ENCODE measurements at regions of chr1 and their contacts with region 1.

Region 1: GRCh38 chr1:15526490-15527339 is at the start of gene DNAJC16:
- DNase-seq: peak; percentile 98
- ATAC-seq: peak; percentile 57
- H3K4me3 Mint-ChIP-seq: peak within 1 kb of the TSS; percentile 84
- H3K27ac Mint-ChIP-seq: peak within 1 kb of the TSS; percentile 88
- H3K4me1 Mint-ChIP-seq: peaks cover 53% of the 10 kb centered on the region
- H3K27me3 Mint-ChIP-seq: no peaks in the 10 kb centered on the region
- total RNA-seq, gene DNAJC16: 10.9 to 14.1 TPM

Region 2: GRCh38 chr1:15246960-15247614 is 279.6 kb before region 1 on chr1 and contains the start of gene FHAD1:
- CTCF ChIA-PET with region 1: no interaction called
- POLR2A ChIA-PET with region 1: no interaction called
- intact Hi-C with region 1: loop called in 1 of 2 experiments (anchors 2 kb)
- DNase-seq: peak; percentile 63
- ATAC-seq: no peak
- H3K4me3 Mint-ChIP-seq: peak within 1 kb of the TSS; percentile 40
- H3K27ac Mint-ChIP-seq: peak within 1 kb of the TSS; percentile 10
- H3K4me1 Mint-ChIP-seq: peaks cover 72% of the 10 kb centered on the region
- H3K27me3 Mint-ChIP-seq: peaks cover 47% of the 10 kb centered on the region
- total RNA-seq, gene FHAD1: 0.21 to 0.53 TPM

Region 3: DNA sequence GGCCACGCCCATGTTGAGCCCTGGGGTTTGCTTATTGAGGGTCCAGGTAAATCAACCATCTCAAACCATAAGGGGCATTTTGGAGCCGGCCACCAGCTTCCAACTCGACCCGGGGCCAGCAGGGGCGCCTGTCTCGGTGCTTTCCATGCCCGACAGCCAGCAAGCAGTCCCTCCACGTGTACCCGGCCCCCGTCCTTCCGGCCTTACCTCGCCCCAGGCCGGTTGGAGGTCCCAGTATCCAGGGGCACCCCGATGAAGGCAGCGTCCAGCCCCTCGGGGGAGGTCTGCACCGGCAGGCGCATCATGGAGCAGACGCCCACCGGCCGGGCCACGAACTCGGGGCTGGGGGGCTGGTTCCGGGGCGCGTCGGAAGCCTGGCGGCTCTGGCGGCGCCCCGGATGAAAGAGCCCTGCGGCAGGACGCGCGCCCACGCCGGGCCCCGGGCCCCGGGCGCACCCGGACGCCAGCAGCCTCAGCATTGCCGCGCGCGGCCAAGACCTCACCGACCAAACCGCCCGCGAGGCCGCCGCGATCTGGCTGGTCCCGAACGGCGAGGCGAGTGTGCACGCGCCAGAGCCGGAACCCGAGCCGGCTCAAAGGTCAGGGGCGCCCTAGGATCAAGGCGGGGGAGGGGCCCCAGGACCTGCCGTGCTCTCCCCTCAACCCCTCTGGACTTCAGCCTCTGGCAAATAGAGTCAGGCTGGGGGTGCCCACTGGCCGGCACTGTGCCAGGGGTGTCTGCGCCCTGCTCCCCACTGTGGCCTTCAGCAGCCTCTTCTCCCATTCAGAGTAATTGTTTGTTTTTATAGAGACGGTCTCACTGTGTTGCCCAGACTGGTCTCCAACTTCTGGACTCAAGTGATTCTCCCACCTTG is 58.0 kb after region 1 on chr1 and contains the start of gene AGMAT:
- CTCF ChIA-PET with region 1: interaction called, 3 read pairs
- POLR2A ChIA-PET with region 1: no interaction called
- intact Hi-C with region 1: loop called (anchors 1 to 5 kb)
- DNase-seq: peak; percentile 82
- ATAC-seq: peak; percentile 80
- H3K4me3 Mint-ChIP-seq: peak within 1 kb of the TSS; percentile 77
- H3K27ac Mint-ChIP-seq: peak within 1 kb of the TSS; percentile 89
- H3K4me1 Mint-ChIP-seq: peaks cover 20% of the 10 kb centered on the region
- H3K27me3 Mint-ChIP-seq: no peaks in the 10 kb centered on the region
- total RNA-seq, gene AGMAT: 18.1 to 24.0 TPM

Region 4: GRCh38 chr1:15678578-15678977 is 151.9 kb after region 1 on chr1:
- CTCF ChIA-PET with region 1: no interaction called
- POLR2A ChIA-PET with region 1: no interaction called
- intact Hi-C with region 1: loop called (anchors 1 to 5 kb)
- DNase-seq: peak; percentile 32
- ATAC-seq: peak; percentile 79
- H3K4me3 Mint-ChIP-seq: no peak overlapping the region
- H3K27ac Mint-ChIP-seq: no peak overlapping the region
- H3K4me1 Mint-ChIP-seq: peaks cover 25% of the 10 kb centered on the region
- H3K27me3 Mint-ChIP-seq: no peaks in the 10 kb centered on the region

Region 5: DNA sequence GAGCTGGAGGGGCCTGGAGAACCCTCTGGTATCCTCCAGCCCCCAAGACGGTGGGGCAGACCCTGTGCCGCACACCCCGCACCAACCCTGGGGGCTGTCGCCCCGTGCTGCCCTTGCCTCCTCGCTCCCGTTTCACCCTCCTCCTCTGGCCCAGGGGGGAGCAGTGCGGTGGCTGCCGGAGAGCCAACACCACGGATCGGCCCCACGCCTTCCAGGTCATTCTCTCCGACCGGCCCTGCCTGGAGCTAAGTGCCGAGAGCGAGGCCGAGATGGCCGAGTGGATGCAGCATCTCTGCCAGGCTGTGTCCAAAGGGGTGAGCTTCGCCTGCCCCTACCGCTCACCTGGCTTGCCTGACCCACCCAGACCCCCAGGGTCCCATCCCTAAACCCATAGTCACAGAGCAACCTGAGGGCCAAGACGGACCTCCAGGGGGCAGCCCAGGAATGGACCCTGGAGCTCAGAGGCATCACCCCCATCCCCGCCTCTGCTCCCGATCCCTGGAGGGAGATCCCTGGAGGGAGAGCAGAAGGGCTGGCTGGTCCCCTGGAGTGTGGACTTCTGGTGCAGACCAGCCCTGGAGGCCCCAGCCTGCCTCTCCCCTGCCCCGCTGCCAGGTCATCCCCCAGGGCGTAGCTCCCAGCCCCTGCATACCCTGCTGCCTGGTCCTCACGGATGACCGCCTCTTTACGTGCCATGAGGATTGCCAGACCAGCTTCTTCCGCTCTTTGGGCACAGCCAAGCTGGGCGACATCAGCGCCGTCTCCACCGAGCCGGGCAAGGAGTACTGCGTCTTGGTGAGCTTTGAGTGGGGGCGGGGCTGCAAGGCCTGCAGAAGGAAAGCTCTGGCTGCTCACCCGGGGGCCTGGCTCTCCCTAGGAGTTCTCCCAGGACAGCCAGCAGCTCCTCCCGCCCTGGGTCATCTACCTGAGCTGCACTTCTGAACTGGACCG is 205.3 kb after region 1 on chr1:
- CTCF ChIA-PET with region 1: no interaction called
- POLR2A ChIA-PET with region 1: no interaction called
- intact Hi-C with region 1: no loop called
- DNase-seq: no peak
- ATAC-seq: no peak
- H3K4me3 Mint-ChIP-seq: no peak overlapping the region
- H3K27ac Mint-ChIP-seq: no peak overlapping the region
- H3K4me1 Mint-ChIP-seq: no peaks in the 10 kb centered on the region
- H3K27me3 Mint-ChIP-seq: no peaks in the 10 kb centered on the region

Region 6: DNA sequence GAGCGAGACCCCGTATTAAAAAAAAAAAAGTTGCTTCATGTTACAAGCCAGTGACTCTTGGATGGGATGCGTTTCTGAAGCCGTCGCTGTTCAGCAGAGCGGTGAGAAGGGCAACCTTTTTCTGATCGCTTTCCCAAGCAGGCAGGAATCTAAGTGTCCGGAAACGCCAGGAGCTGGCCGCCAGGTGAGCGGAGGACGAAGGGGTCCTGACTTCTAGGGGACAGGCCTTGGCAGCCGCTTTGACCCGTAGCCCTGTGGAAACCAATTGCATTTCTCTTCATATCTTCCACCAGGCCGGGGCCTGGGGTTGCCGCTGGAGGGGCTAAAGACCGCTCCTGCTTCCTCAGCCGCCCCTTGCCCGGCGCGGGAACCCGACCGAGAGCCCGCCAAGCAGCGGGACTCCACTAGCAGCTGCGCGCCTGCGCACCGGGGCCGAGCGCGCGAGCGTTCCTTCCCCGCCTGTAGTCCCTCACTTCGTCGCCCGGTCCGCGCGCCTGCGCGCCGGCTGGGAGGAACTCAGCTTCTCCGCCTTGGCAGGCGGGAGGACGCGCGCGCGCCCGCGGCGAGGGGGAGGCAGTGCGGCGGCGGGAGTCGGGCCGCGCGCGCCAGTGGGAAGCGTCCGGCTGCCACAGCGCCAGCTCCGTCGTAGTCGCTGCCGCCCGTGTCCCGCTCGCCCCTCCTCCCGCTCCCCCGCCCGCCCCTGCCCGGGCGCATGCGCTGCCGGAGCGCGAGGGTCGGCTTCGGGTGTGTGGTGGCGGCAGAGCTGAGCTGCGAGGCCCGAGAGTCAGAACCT is 320.6 kb after region 1 on chr1 and contains the start of gene SPEN:
- CTCF ChIA-PET with region 1: no interaction called
- POLR2A ChIA-PET with region 1: no interaction called
- intact Hi-C with region 1: loop called in 1 of 2 experiments (anchors 1 kb)
- DNase-seq: peak; percentile 99
- ATAC-seq: peak; percentile 88
- H3K4me3 Mint-ChIP-seq: peak within 1 kb of the TSS; percentile 91
- H3K27ac Mint-ChIP-seq: peak within 1 kb of the TSS; percentile 94
- H3K4me1 Mint-ChIP-seq: peaks cover 47% of the 10 kb centered on the region
- H3K27me3 Mint-ChIP-seq: no peaks in the 10 kb centered on the region
- total RNA-seq, gene SPEN: 43.2 to 52.7 TPM

Region 7: GRCh38 chr1:16206547-16207317 is 680.0 kb after region 1 on chr1:
- CTCF ChIA-PET with region 1: no interaction called
- POLR2A ChIA-PET with region 1: no interaction called
- intact Hi-C with region 1: loop called in 1 of 2 experiments (anchors 1 kb)
- DNase-seq: peak; percentile 97
- ATAC-seq: peak; percentile 94
- H3K4me3 Mint-ChIP-seq: peak overlapping the region; percentile 72
- H3K27ac Mint-ChIP-seq: peak overlapping the region; percentile 90
- H3K4me1 Mint-ChIP-seq: peaks cover 9% of the 10 kb centered on the region
- H3K27me3 Mint-ChIP-seq: no peaks in the 10 kb centered on the region

Region 8: GRCh38 chr1:16904560-16905111 is 1377.9 kb after region 1 on chr1:
- CTCF ChIA-PET with region 1: no interaction called
- POLR2A ChIA-PET with region 1: no interaction called
- intact Hi-C with region 1: loop called in 1 of 2 experiments (anchors 2 kb)
- DNase-seq: peak; percentile 100
- ATAC-seq: peak; percentile 90
- H3K4me3 Mint-ChIP-seq: no peak overlapping the region
- H3K27ac Mint-ChIP-seq: no peak overlapping the region
- H3K4me1 Mint-ChIP-seq: peaks cover 30% of the 10 kb centered on the region
- H3K27me3 Mint-ChIP-seq: no peaks in the 10 kb centered on the region

Measured in activated CD4-positive, alpha-beta T cell treated with anti-CD3 and anti-CD28 coated beads for 36 hours (primary cell).